ENCODE measurements at regions of chr4 and their contacts with region 1.

Region 1: GRCh38 chr4:167021545-167022155 is 212.6 kb downstream of the SPOCK3 start:
- DNase-seq: peak; percentile 32 to 67 (median 34)
- ATAC-seq: peak in 3 of 4 donors; percentile 47 to 65 (median 63)
- H3K4me3 ChIP-seq: no peak overlapping the region
- H3K27ac ChIP-seq: no peak overlapping the region
- H3K4me1 ChIP-seq: peaks cover 0 to 4% (median 0%) of the 10 kb centered on the region in 12 donors
- H3K27me3 ChIP-seq: no peaks in the 10 kb centered on the region
- CTCF ChIP-seq: peak; percentile 68 to 84 (median 76)
- POLR2A ChIP-seq: no peak

Region 2: GRCh38 chr4:166846939-166847338 is 174.7 kb before region 1 on chr4:
- intact Hi-C with region 1: no loop called
- DNase-seq: no peak
- ATAC-seq: no peak
- H3K4me3 ChIP-seq: no peak overlapping the region
- H3K27ac ChIP-seq: no peak overlapping the region
- H3K4me1 ChIP-seq: no peaks in the 10 kb centered on the region
- H3K27me3 ChIP-seq: no peaks in the 10 kb centered on the region
- CTCF ChIP-seq: no peak
- POLR2A ChIP-seq: no peak

Region 3: DNA sequence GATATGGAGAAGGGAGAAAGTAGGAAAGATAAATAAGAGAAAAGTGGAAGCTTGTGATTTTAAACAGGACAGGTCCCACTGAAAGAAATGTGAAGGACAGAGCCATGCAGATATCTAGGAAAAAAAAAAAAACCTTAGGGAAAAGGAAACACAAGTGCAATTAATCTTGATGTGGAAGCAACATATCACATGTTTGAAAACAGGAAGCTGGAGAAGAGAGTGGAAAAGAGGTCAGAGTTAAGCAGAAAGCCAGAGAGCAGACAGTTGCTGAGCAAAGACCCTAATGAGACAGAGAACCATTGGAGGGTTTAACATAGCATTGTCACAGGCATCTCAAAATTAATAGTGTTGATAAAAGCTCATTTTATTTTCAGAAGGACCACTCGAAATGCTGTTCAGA is 123.0 kb after region 1 on chr4:
- intact Hi-C with region 1: loop called in 1 of 10 experiments (anchors 5 kb)
- DNase-seq: no peak
- ATAC-seq: no peak
- H3K4me3 ChIP-seq: no peak overlapping the region
- H3K27ac ChIP-seq: no peak overlapping the region
- H3K4me1 ChIP-seq: no peaks in the 10 kb centered on the region
- H3K27me3 ChIP-seq: no peaks in the 10 kb centered on the region
- CTCF ChIP-seq: no peak
- POLR2A ChIP-seq: no peak

Region 4: DNA sequence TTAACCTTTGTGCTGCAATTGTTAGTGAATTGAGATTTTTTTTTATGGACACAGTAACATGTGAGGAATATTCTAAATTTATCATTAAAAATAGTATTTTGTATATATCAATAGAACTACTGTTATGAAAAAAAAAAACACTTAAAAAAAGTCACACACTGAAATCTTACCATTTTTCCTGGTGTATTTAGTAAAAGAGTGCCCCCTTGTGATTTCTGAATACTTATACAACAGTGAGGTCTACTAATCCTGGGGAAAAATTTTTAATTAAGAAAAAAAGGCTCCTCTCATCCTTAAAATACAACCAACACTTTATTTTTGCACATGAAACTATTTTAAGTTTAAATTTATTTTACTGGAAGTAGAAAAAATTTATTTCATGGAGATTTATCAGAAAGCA is 269.0 kb after region 1 on chr4:
- intact Hi-C with region 1: loop called (anchors 1 to 5 kb)
- DNase-seq: no peak
- ATAC-seq: no peak
- H3K4me3 ChIP-seq: no peak overlapping the region
- H3K27ac ChIP-seq: no peak overlapping the region
- H3K4me1 ChIP-seq: no peaks in the 10 kb centered on the region
- H3K27me3 ChIP-seq: no peaks in the 10 kb centered on the region
- CTCF ChIP-seq: peak in 10 of 12 donors; percentile 7 to 49 (median 33)
- POLR2A ChIP-seq: no peak

Region 5: GRCh38 chr4:167544391-167544790 is 522.7 kb after region 1 on chr4:
- intact Hi-C with region 1: no loop called
- DNase-seq: no peak
- ATAC-seq: no peak
- H3K4me3 ChIP-seq: no peak overlapping the region
- H3K27ac ChIP-seq: no peak overlapping the region
- H3K4me1 ChIP-seq: no peaks in the 10 kb centered on the region
- H3K27me3 ChIP-seq: no peaks in the 10 kb centered on the region
- CTCF ChIP-seq: no peak
- POLR2A ChIP-seq: no peak

Region 6: GRCh38 chr4:167622481-167623246 is 601.0 kb after region 1 on chr4:
- intact Hi-C with region 1: loop called in 2 of 10 experiments (anchors 5 kb)
- DNase-seq: peak in 1 of 5 donors; percentile 27
- ATAC-seq: peak in 1 of 4 donors; percentile 64
- H3K4me3 ChIP-seq: no peak overlapping the region
- H3K27ac ChIP-seq: no peak overlapping the region
- H3K4me1 ChIP-seq: no peaks in the 10 kb centered on the region
- H3K27me3 ChIP-seq: no peaks in the 10 kb centered on the region
- CTCF ChIP-seq: peak; percentile 27 to 69 (median 53)
- POLR2A ChIP-seq: no peak

Region 7: GRCh38 chr4:168076989-168077725 is 1055.5 kb after region 1 on chr4:
- intact Hi-C with region 1: loop called in 7 of 10 experiments (anchors 5 to 10 kb)
- DNase-seq: peak in 3 of 5 donors; percentile 18 to 27 (median 20)
- ATAC-seq: peak in 1 of 4 donors; percentile 59
- H3K4me3 ChIP-seq: no peak overlapping the region
- H3K27ac ChIP-seq: no peak overlapping the region
- H3K4me1 ChIP-seq: no peaks in the 10 kb centered on the region
- H3K27me3 ChIP-seq: no peaks in the 10 kb centered on the region
- CTCF ChIP-seq: peak; percentile 56 to 81 (median 70)
- POLR2A ChIP-seq: no peak

Region 8: GRCh38 chr4:168153596-168154440 is 1132.2 kb after region 1 on chr4:
- intact Hi-C with region 1: loop called in 2 of 10 experiments (anchors 5 to 10 kb)
- DNase-seq: peak; percentile 48 to 88 (median 60)
- ATAC-seq: peak; percentile 37 to 74 (median 66)
- H3K4me3 ChIP-seq: peak overlapping the region in 9 of 12 donors; percentile 0 to 42 (median 25)
- H3K27ac ChIP-seq: no peak overlapping the region
- H3K4me1 ChIP-seq: peaks cover 0 to 3% (median 0%) of the 10 kb centered on the region in 12 donors
- H3K27me3 ChIP-seq: no peaks in the 10 kb centered on the region
- CTCF ChIP-seq: peak; percentile 30 to 70 (median 52)
- POLR2A ChIP-seq: no peak